PC-9 (cell line): ENCODE measurements at regions of chr16 and their contacts with region 1.

Region 1: GRCh38 chr16:51184702-51185433 is 33.8 kb upstream of the SALL1 start:
- DNase-seq: no peak
- H3K4me3 ChIP-seq: no peak overlapping the region
- H3K27ac ChIP-seq: no peak overlapping the region
- H3K4me1 ChIP-seq: no peaks in the 10 kb centered on the region
- H3K27me3 ChIP-seq: no peaks in the 10 kb centered on the region
- CTCF ChIP-seq: no peak

Region 2: GRCh38 chr16:51200793-51201192 is 15.9 kb after region 1 on chr16:
- CTCF ChIA-PET with region 1: interaction called, 14 read pairs
- POLR2A ChIA-PET with region 1: no interaction called
- intact Hi-C with region 1: no loop called
- DNase-seq: no peak
- H3K4me3 ChIP-seq: no peak overlapping the region
- H3K27ac ChIP-seq: no peak overlapping the region
- H3K4me1 ChIP-seq: no peaks in the 10 kb centered on the region
- H3K27me3 ChIP-seq: no peaks in the 10 kb centered on the region
- CTCF ChIP-seq: no peak

Region 3: DNA sequence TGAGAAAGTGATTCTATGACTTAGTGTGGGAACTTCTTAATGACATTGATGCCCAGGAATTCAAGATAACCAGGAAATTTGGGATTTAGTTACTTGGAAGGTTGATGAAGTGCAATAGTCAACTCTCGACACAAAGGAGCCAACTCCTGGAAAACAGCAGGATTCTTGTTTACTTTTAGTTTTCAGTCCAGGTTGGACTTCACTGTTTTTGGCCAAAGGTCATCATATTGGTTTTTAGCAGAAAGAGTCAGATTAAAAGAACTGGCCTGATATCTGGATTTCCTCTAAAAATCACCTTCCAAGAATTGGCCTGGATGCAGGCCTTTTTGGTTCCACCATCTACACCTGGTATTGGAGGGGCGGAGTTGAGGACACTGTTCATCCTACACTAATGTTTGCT is 26.3 kb after region 1 on chr16:
- CTCF ChIA-PET with region 1: no interaction called
- POLR2A ChIA-PET with region 1: no interaction called
- intact Hi-C with region 1: no loop called
- DNase-seq: no peak
- H3K4me3 ChIP-seq: no peak overlapping the region
- H3K27ac ChIP-seq: no peak overlapping the region
- H3K4me1 ChIP-seq: no peaks in the 10 kb centered on the region
- H3K27me3 ChIP-seq: no peaks in the 10 kb centered on the region
- CTCF ChIP-seq: no peak

Region 4: DNA sequence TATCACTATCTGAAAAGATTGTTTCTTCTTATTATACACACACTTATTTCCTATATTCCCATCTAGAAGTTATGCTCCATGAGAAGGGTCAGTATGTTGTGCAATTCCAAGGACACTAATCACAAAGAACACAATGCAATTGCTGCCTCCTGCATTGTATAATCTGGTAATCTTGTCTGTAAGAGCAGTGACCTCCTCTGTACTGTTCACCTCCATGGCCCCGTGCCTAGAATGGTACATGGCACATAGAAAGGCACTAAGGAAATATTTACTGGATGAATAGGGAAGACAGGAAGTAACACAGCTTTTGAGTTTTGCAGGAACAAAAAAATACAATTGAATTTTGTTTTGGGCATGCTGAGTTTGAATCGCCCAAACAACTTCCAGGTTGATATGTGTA is 180.8 kb after region 1 on chr16:
- CTCF ChIA-PET with region 1: no interaction called
- POLR2A ChIA-PET with region 1: no interaction called
- intact Hi-C with region 1: no loop called
- DNase-seq: no peak
- H3K4me3 ChIP-seq: no peak overlapping the region
- H3K27ac ChIP-seq: no peak overlapping the region
- H3K4me1 ChIP-seq: no peaks in the 10 kb centered on the region
- H3K27me3 ChIP-seq: peaks cover 4% of the 10 kb centered on the region; the same call in 1 of the 2 replicates
- CTCF ChIP-seq: no peak

Region 5: GRCh38 chr16:51416926-51417325 is 232.1 kb after region 1 on chr16:
- CTCF ChIA-PET with region 1: no interaction called
- POLR2A ChIA-PET with region 1: no interaction called
- intact Hi-C with region 1: no loop called
- DNase-seq: no peak
- H3K4me3 ChIP-seq: no peak overlapping the region
- H3K27ac ChIP-seq: no peak overlapping the region
- H3K4me1 ChIP-seq: no peaks in the 10 kb centered on the region
- H3K27me3 ChIP-seq: peaks cover 34% of the 10 kb centered on the region
- CTCF ChIP-seq: no peak

Region 6: GRCh38 chr16:51500306-51500705 is 315.4 kb after region 1 on chr16:
- CTCF ChIA-PET with region 1: no interaction called
- POLR2A ChIA-PET with region 1: no interaction called
- intact Hi-C with region 1: no loop called
- DNase-seq: no peak
- H3K4me3 ChIP-seq: no peak overlapping the region
- H3K27ac ChIP-seq: no peak overlapping the region
- H3K4me1 ChIP-seq: no peaks in the 10 kb centered on the region
- H3K27me3 ChIP-seq: 0 out of 2 replicates have a peak, but pooled peaks cover 3% of the 10 kb centered on the region
- CTCF ChIP-seq: no peak